ENCODE measurements at regions of chr9 and their contacts with region 1.

Region 1: DNA sequence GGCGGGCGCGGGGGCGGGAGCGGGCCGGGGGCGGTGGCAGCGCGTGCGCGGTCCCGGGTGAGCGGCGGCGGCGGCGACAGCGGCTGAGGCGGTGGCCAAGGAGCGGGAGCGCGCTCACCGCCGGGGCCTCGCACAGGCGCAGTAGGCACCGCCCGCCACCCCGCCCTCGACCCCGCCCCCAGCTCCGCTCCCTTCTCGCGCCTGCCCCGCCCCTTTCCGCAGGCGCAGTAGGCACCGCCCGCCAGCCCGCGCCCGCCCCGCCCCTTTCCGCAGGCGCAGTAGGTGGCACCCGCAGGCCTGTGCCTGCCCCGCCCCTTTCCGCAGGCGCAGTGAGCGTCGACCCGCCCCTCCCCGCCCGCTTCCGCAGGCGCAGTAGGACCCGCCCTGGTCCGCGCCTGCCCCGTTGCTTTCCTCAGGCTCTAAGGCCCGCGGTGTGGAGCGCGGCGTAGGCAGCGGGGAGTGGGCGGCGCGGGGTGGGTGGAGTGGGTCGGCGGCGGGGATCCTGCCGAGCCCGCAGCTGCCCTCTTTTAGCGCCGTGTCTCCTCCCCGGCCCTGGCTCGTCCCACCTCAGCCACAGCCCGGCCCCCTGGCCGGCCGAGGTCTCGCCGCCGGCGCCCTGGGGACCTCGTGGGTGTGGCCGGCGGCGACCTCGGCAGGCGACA is at the start of gene CAMSAP1:
- DNase-seq: peak; percentile 90
- H3K4me3 Mint-ChIP-seq: peak within 1 kb of the TSS; percentile 80
- H3K27ac Mint-ChIP-seq: peak within 1 kb of the TSS; percentile 81
- H3K4me1 Mint-ChIP-seq: peaks cover 40% of the 10 kb centered on the region
- H3K27me3 Mint-ChIP-seq: no peaks in the 10 kb centered on the region
- total RNA-seq, gene CAMSAP1: 44.2 and 44.4 TPM in 2 replicates

Region 2: GRCh38 chr9:135926402-135927194 is 19.0 kb after region 1 on chr9:
- intact Hi-C with region 1: loop called (anchors 1 kb)
- DNase-seq: peak; percentile 58
- H3K4me3 Mint-ChIP-seq: no peak overlapping the region
- H3K27ac Mint-ChIP-seq: peak overlapping the region; percentile 91
- H3K4me1 Mint-ChIP-seq: peaks cover 27% of the 10 kb centered on the region
- H3K27me3 Mint-ChIP-seq: no peaks in the 10 kb centered on the region

Region 3: GRCh38 chr9:135961277-135961705 is 53.7 kb after region 1 on chr9 and contains the start of gene UBAC1:
- intact Hi-C with region 1: loop called (anchors 2 kb)
- DNase-seq: peak; percentile 92
- H3K4me3 Mint-ChIP-seq: peak within 1 kb of the TSS; percentile 89
- H3K27ac Mint-ChIP-seq: peak within 1 kb of the TSS; percentile 68
- H3K4me1 Mint-ChIP-seq: peaks cover 22% of the 10 kb centered on the region
- H3K27me3 Mint-ChIP-seq: no peaks in the 10 kb centered on the region
- total RNA-seq, gene UBAC1: 42.3 and 47.2 TPM in 2 replicates

Region 4: DNA sequence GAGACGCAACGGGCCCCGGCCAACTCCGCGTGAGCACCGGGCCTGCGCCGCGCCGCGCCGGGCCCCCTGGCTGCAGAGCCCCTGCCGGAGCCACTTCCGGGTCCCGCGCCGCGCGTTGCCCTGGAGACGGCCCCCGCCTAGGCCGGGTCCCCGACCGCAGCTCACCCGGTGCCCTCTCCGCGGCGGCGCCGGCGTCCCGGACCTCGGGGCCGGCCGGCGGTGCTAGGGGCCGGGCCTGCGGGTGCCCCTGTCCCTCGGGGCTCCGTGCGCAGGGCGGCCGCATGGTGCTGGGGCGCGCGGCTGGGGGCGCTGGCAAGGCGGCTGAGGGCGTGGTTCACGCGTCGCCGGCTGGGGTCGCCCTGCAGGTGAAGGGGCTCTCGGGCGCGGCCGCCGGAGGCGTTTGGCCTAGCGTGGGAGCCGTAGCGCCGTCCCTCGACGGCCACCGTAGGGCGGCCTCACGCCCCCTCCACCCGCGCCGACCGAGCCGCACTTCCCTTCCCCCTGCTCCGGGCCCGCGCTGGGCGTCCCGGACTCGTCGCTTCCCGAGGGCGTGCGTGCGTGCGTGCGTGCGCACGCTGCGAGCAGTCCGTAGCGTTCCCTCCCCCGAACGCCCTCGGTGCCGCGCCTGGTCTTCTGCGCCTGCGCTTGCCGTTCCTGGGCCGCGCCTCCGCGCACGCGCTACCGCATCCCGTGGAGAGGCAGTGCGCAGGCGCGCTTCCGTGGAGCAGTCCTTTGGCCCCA is 210.9 kb after region 1 on chr9 and contains the start of gene TMEM250:
- intact Hi-C with region 1: loop called (anchors 1 kb)
- DNase-seq: peak; percentile 95
- H3K4me3 Mint-ChIP-seq: peak within 1 kb of the TSS; percentile 83
- H3K27ac Mint-ChIP-seq: peak within 1 kb of the TSS; percentile 78
- H3K4me1 Mint-ChIP-seq: peaks cover 9% of the 10 kb centered on the region
- H3K27me3 Mint-ChIP-seq: no peaks in the 10 kb centered on the region
- total RNA-seq, gene TMEM250: 43.1 and 43.5 TPM in 2 replicates

Region 5: GRCh38 chr9:136245219-136246150 is 337.9 kb after region 1 on chr9 and contains the start of gene QSOX2:
- intact Hi-C with region 1: loop called (anchors 10 kb)
- DNase-seq: peak; percentile 81
- H3K4me3 Mint-ChIP-seq: peak within 1 kb of the TSS; percentile 92
- H3K27ac Mint-ChIP-seq: peak within 1 kb of the TSS; percentile 90
- H3K4me1 Mint-ChIP-seq: peaks cover 26% of the 10 kb centered on the region
- H3K27me3 Mint-ChIP-seq: peaks cover 4% of the 10 kb centered on the region
- total RNA-seq, gene QSOX2: 24.9 and 25.4 TPM in 2 replicates

Measured in activated T-helper 2 cell treated with anti-CD3 and anti-CD28 coated beads, Interferon-gamma antibody, Interleukin-2, Interleukin-4, amounts not matched to agents 10 μg/mL and 5 μg/mL and 100 μg/mL, durations not matched to agents 14 hours and 24 hours and 36 hours (primary cell).